Dorsolateral prefrontal cortex (tissue), 120 donors: ENCODE measurements at regions of chr21 and their contacts with region 1.

Region 1: DNA sequence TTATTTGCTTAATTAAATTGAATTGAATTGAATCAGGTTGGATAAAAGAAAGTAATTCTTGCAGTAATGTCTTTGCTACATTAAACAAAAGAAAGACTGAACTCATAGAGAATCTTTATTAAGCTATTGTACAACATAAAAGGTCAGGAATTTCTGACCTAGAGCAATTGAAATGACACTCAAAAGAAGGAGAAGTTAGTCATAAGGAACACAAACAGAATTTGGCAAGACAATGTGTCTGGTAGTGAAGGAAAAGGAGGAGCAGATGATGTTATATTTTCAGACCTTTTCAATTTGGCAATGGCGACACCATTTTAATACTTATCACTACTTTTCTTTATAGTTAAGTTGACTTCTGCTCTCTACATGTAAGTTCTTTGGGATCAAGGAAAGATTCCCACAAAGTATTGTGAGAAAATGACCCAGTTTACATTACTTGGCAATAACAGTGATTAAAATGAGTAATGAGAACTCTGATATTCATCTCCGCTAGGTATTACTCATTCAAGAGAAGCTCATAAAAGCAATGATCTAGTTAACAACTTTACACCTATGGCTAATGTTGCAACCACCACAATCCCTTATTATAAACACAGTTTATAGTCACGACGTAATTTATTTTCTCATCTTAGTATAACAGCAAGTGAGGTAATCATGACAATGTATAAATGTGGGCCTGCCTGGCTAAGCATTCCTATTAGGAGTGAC is 14.7 kb upstream of the KRTAP21-1 start:
- DNase-seq: no peak
- H3K4me3 ChIP-seq: no peak overlapping the region
- H3K27ac ChIP-seq: no peak overlapping the region
- H3K27me3 ChIP-seq: peaks cover 0 to 6% (median 0%) of the 10 kb centered on the region in 45 donors
- CTCF ChIP-seq: no peak

Region 2: DNA sequence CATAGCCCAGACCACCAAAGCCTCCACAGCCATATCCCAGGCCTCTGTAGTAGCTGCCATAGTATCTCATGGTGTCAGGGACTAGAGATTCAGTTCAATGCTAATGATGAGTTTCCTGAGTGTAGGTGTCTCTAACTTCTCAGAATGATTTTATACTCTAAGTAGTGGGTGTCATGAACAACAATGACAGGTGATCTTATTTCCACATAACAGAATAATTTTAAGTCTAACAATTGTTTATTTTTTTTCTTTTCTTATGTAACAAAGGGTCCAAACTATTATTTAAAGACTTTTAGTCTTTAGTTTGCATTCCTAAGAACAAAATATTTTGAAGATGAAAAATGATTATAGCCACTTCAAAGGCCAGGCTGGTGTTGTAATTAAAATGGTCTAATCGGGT is 228.1 kb before region 1 on chr21 and contains the start of gene KRTAP19-6:
- intact Hi-C with region 1: no loop called
- DNase-seq: no peak
- H3K4me3 ChIP-seq: no peak within 1 kb of the TSS
- H3K27ac ChIP-seq: no peak within 1 kb of the TSS
- H3K27me3 ChIP-seq: no peaks in the 10 kb centered on the region
- CTCF ChIP-seq: no peak
- total RNA-seq, gene KRTAP19-6: not detected

Region 3: DNA sequence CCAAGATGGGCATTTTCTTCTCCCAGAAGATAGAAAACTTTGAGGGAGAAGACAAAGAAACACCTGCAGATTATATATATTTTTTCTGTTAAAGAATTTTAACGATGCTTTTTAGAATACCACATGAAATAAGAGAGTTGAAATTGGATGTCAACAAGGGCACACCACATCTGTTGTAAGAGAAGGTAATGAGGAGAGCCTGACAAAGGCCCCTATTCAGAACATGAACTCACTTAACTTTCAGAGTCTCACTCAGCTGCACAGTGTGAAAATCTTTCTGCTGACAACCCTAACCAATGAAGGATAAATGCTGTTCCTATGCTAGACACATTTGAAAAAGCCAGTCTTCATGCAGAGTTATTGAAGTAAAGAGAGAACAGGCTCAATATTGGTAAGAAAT is 187.0 kb before region 1 on chr21:
- intact Hi-C with region 1: no loop called
- DNase-seq: no peak
- H3K4me3 ChIP-seq: no peak overlapping the region
- H3K27ac ChIP-seq: no peak overlapping the region
- H3K27me3 ChIP-seq: no peaks in the 10 kb centered on the region
- CTCF ChIP-seq: no peak

Region 4: DNA sequence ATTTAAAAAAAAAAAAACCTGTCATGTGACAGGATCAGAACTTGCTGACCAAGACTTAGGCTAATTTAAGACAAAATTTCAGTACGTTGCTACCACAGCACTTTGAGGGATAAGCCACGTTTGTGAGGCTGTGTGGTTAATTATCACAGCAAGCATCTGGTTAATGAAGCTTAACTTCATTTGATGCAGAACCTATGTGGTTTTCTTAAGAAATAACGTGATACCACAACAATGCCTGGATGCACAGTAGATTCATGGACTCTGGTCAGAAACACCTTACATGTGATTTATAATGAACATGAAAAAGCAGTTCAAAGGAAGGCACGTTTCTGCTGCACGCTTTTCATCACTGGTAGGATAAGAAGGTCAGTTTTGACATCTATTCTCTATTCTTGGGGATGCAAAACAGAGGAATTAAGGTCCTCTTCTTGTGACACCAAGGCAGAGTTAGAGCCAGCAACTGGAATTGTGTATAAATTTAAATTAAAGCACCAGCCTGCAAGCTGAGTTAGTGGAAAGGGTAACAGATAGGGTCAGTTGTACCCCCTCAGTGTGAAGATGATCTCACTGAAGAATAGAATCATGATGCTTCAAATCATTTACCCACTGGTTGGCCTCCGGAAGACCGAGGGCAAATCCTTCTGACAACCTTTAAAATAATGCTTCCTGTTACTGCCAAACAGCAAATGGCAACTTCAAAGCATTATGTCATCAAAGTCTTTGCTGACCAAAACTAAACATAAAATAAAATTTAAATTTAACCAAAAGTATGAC is 49.1 kb after region 1 on chr21:
- intact Hi-C with region 1: loop called in 1 of 2 experiments (anchors 10 kb)
- DNase-seq: no peak
- H3K4me3 ChIP-seq: no peak overlapping the region
- H3K27ac ChIP-seq: no peak overlapping the region
- H3K27me3 ChIP-seq: no peaks in the 10 kb centered on the region
- CTCF ChIP-seq: no peak

Region 5: DNA sequence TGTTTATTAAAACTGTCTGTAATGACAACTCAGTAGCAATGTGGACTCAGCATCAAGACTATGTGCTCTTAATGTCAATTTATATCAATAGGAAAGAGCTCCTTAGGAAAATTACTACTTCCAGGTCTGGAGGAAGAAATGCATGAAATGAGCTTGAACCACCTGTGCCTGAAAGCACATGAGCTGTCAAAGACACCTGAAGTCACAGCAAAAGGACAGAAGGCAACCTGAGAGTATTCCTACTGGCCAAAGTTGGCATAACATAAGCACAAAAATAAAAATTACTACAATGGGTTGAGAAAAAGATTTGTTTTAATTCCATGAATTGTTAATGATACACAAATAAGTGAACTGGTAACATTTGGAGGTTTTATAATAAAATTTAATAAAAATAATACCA is 73.1 kb after region 1 on chr21:
- intact Hi-C with region 1: no loop called
- DNase-seq: no peak
- H3K4me3 ChIP-seq: no peak overlapping the region
- H3K27ac ChIP-seq: no peak overlapping the region
- H3K27me3 ChIP-seq: no peaks in the 10 kb centered on the region
- CTCF ChIP-seq: peak in 7 of 56 donors; percentile 10 to 36 (median 20)

Region 6: GRCh38 chr21:31476263-31477022 is 706.6 kb after region 1 on chr21:
- intact Hi-C with region 1: no loop called
- DNase-seq: peak in 2 of 10 donors; percentile 20 to 25
- H3K4me3 ChIP-seq: peak overlapping the region in 1 of 59 donors; percentile 10
- H3K27ac ChIP-seq: peak overlapping the region in 52 of 59 donors; percentile 1 to 100 (median 54)
- H3K27me3 ChIP-seq: no peaks in the 10 kb centered on the region
- CTCF ChIP-seq: peak in 31 of 56 donors; percentile 10 to 48 (median 30)